AG04450 (cell line): ENCODE measurements at regions of chr20 and their contacts with region 1.

Region 1: GRCh38 chr20:3115190-3116107 is 30.9 kb upstream of the AVP start:
- DNase-seq: peak; percentile 23
- H3K4me3 ChIP-seq: no peak overlapping the region
- H3K27ac ChIP-seq: no peak overlapping the region
- H3K27me3 ChIP-seq: no peaks in the 10 kb centered on the region
- CTCF ChIP-seq: peak; percentile 83

Region 2: GRCh38 chr20:3041854-3042409 is 73.5 kb before region 1 on chr20:
- CTCF ChIA-PET with region 1: interaction called, 14 read pairs
- POLR2A ChIA-PET with region 1: interaction called, 7 read pairs
- DNase-seq: no peak
- H3K4me3 ChIP-seq: peak overlapping the region; percentile 29
- H3K27ac ChIP-seq: peak overlapping the region; percentile 21
- H3K27me3 ChIP-seq: no peaks in the 10 kb centered on the region
- CTCF ChIP-seq: no peak

Region 3: DNA sequence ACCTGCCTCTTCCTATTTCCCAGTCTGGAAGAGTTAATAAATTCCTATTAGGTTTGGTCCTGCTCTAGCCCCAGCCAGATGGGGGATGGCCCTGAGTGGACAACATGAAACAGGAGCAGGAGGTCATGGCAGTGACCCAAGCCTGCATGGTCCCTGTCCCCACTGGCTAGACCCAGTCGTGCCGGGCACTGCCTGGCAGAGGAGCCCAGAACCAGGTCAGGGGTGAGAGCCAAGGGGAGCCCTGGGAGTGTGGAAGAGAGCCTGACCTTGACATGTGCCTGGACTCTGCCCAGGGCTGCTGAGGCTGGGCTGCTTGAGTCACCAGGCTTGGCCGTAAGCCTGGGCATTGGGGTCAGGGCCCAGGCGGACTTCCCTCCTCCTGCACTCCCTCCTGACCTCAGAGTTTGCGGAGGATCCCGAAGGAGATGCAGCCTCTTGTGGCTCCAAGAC is 34.5 kb before region 1 on chr20:
- CTCF ChIA-PET with region 1: no interaction called
- POLR2A ChIA-PET with region 1: no interaction called
- DNase-seq: no peak
- H3K4me3 ChIP-seq: no peak overlapping the region
- H3K27ac ChIP-seq: no peak overlapping the region
- H3K27me3 ChIP-seq: peaks cover 49% of the 10 kb centered on the region
- CTCF ChIP-seq: no peak